Naive thymus-derived CD4-positive, alpha-beta T cell (primary cell): ENCODE measurements at regions of chr5 and their contacts with region 1.

Region 1: DNA sequence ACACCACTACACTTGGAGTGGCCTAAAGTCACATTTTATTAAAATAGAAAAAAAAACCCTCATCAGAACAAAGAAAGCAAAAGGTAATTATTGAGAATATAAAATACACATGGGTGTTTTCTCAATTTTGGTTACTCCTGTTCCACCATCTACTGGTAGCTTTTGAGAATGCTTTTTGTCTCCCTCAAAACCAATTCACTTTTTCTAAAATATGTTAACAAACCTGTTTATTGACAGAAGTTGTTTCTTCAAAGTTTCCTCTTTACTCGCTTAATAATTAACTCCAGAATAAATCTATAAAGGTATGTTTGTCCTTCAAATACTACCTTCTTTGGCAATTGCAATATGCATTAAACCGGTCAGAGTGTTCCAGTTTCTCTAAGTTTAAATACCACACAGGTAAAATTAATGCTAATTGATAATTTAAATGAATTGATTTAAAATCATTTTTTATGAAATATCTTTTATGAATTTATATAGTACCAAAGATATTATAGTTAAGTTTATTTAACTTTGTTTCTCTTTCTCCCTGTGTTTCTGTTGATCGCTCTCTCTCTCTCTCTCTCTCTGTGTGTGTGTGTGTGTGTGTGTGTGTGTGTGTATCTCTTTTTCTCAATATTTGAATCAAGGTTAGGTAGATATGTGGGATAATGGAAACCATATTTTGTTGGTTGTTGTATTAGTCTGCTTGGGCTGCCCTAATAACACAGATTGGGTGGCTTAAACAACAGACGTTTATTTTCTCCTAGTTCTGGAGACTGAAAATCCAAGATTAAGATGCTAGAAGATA is 487.4 kb downstream of the PRDM9 start:
- DNase-seq: no peak
- ATAC-seq: no peak
- H3K4me3 ChIP-seq: no peak overlapping the region
- H3K4me3 Mint-ChIP-seq: no peak overlapping the region
- H3K27ac ChIP-seq: no peak overlapping the region
- H3K27ac Mint-ChIP-seq: no peak overlapping the region
- H3K4me1 ChIP-seq: no peaks in the 10 kb centered on the region
- H3K4me1 Mint-ChIP-seq: peaks cover 0 to 2% (median 0%) of the 10 kb centered on the region in 7 donors
- H3K27me3 ChIP-seq: no peaks in the 10 kb centered on the region
- H3K27me3 Mint-ChIP-seq: no peaks in the 10 kb centered on the region

Region 2: GRCh38 chr5:23446436-23446835 is 548.3 kb before region 1 on chr5:
- CTCF ChIA-PET with region 1: no interaction called
- POLR2A ChIA-PET with region 1: no interaction called
- intact Hi-C with region 1: no loop called
- DNase-seq: no peak
- ATAC-seq: no peak
- H3K4me3 ChIP-seq: no peak overlapping the region
- H3K4me3 Mint-ChIP-seq: no peak overlapping the region
- H3K27ac ChIP-seq: no peak overlapping the region
- H3K27ac Mint-ChIP-seq: no peak overlapping the region
- H3K4me1 ChIP-seq: no peaks in the 10 kb centered on the region
- H3K4me1 Mint-ChIP-seq: no peaks in the 10 kb centered on the region
- H3K27me3 ChIP-seq: no peaks in the 10 kb centered on the region
- H3K27me3 Mint-ChIP-seq: no peaks in the 10 kb centered on the region

Region 3: GRCh38 chr5:23963449-23963848 is 31.3 kb before region 1 on chr5:
- CTCF ChIA-PET with region 1: no interaction called
- POLR2A ChIA-PET with region 1: no interaction called
- intact Hi-C with region 1: loop called in 1 of 2 experiments (anchors 1 kb)
- DNase-seq: no peak
- ATAC-seq: no peak
- H3K4me3 ChIP-seq: no peak overlapping the region
- H3K4me3 Mint-ChIP-seq: no peak overlapping the region
- H3K27ac ChIP-seq: no peak overlapping the region
- H3K27ac Mint-ChIP-seq: no peak overlapping the region
- H3K4me1 ChIP-seq: no peaks in the 10 kb centered on the region
- H3K4me1 Mint-ChIP-seq: no peaks in the 10 kb centered on the region
- H3K27me3 ChIP-seq: no peaks in the 10 kb centered on the region
- H3K27me3 Mint-ChIP-seq: no peaks in the 10 kb centered on the region

Region 4: DNA sequence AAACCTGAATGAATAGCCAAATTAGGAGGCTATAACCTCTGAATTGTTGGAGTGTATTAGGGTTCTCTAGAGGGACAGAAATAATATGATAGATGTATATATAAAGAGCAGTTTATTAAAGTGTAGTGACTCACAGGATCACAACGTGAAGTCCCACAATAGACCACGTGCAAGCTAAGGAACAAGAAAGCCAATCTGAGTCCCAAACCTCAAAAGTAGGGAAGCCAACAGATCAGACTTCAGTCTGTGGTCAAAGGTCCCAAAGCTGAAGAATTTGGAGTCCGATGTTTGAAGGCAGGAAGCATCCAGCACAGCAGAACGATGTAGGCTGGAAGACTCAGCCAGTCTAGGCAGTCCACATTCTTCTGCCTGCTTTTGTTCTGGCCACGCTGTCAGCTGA is 99.3 kb after region 1 on chr5:
- CTCF ChIA-PET with region 1: no interaction called
- POLR2A ChIA-PET with region 1: no interaction called
- intact Hi-C with region 1: no loop called
- DNase-seq: no peak
- ATAC-seq: no peak
- H3K4me3 ChIP-seq: no peak overlapping the region
- H3K4me3 Mint-ChIP-seq: no peak overlapping the region
- H3K27ac ChIP-seq: no peak overlapping the region
- H3K27ac Mint-ChIP-seq: no peak overlapping the region
- H3K4me1 ChIP-seq: no peaks in the 10 kb centered on the region
- H3K4me1 Mint-ChIP-seq: no peaks in the 10 kb centered on the region
- H3K27me3 ChIP-seq: no peaks in the 10 kb centered on the region
- H3K27me3 Mint-ChIP-seq: no peaks in the 10 kb centered on the region